ENCODE measurements at regions of chr12 and their contacts with region 1.

Region 1: GRCh38 chr12:113174461-113175384 is 10.6 kb downstream of the DDX54 start:
- DNase-seq: peak; percentile 86
- ATAC-seq: peak; percentile 88
- H3K4me3 Mint-ChIP-seq: no peak overlapping the region
- H3K27ac Mint-ChIP-seq: peak overlapping the region; percentile 90
- H3K4me1 Mint-ChIP-seq: no peaks in the 10 kb centered on the region
- H3K27me3 Mint-ChIP-seq: no peaks in the 10 kb centered on the region
- CTCF ChIP-seq: peak; percentile 99

Region 2: GRCh38 chr12:113065126-113066007 is 109.4 kb before region 1 on chr12:
- CTCF ChIA-PET with region 1: interaction called, 14 read pairs
- POLR2A ChIA-PET with region 1: no interaction called
- DNase-seq: peak; percentile 77
- ATAC-seq: peak; percentile 82
- H3K4me3 Mint-ChIP-seq: peak overlapping the region; percentile 47
- H3K27ac Mint-ChIP-seq: no peak overlapping the region
- H3K4me1 Mint-ChIP-seq: peaks cover 31% of the 10 kb centered on the region
- H3K27me3 Mint-ChIP-seq: peaks cover 3% of the 10 kb centered on the region; the same call in 1 of the 2 replicates
- CTCF ChIP-seq: no peak

Region 3: GRCh38 chr12:113092607-113093408 is 81.9 kb before region 1 on chr12:
- CTCF ChIA-PET with region 1: interaction called, 11 read pairs
- POLR2A ChIA-PET with region 1: no interaction called
- DNase-seq: peak; percentile 89
- ATAC-seq: peak; percentile 91
- H3K4me3 Mint-ChIP-seq: peak overlapping the region; percentile 80
- H3K27ac Mint-ChIP-seq: peak overlapping the region; percentile 70
- H3K4me1 Mint-ChIP-seq: peaks cover 11% of the 10 kb centered on the region
- H3K27me3 Mint-ChIP-seq: no peaks in the 10 kb centered on the region; the same call in none of the 2 replicates
- CTCF ChIP-seq: no peak

Region 4: GRCh38 chr12:113135178-113136127 is 39.3 kb before region 1 on chr12 and contains the start of gene RASAL1:
- CTCF ChIA-PET with region 1: interaction called, 20 read pairs
- POLR2A ChIA-PET with region 1: no interaction called
- DNase-seq: peak; percentile 94
- ATAC-seq: peak; percentile 89
- H3K4me3 Mint-ChIP-seq: peak within 1 kb of the TSS; percentile 74
- H3K27ac Mint-ChIP-seq: 0 out of 2 replicates have a peak within 1 kb of the TSS, but pooled peaks have one; percentile 20
- H3K4me1 Mint-ChIP-seq: peaks cover 18% of the 10 kb centered on the region
- H3K27me3 Mint-ChIP-seq: peaks cover 26% of the 10 kb centered on the region
- CTCF ChIP-seq: peak; percentile 81
- total RNA-seq, gene RASAL1: 6.9 to 8.1 TPM (median 8.0 TPM) in 3 replicates

Region 5: GRCh38 chr12:113152835-113153814 is 21.6 kb before region 1 on chr12:
- CTCF ChIA-PET with region 1: interaction called, 40 read pairs
- POLR2A ChIA-PET with region 1: no interaction called
- DNase-seq: peak; percentile 72
- ATAC-seq: peak; percentile 49
- H3K4me3 Mint-ChIP-seq: peak overlapping the region; percentile 67
- H3K27ac Mint-ChIP-seq: no peak overlapping the region
- H3K4me1 Mint-ChIP-seq: peaks cover 21% of the 10 kb centered on the region
- H3K27me3 Mint-ChIP-seq: peaks cover 58% of the 10 kb centered on the region
- CTCF ChIP-seq: no peak

Region 6: DNA sequence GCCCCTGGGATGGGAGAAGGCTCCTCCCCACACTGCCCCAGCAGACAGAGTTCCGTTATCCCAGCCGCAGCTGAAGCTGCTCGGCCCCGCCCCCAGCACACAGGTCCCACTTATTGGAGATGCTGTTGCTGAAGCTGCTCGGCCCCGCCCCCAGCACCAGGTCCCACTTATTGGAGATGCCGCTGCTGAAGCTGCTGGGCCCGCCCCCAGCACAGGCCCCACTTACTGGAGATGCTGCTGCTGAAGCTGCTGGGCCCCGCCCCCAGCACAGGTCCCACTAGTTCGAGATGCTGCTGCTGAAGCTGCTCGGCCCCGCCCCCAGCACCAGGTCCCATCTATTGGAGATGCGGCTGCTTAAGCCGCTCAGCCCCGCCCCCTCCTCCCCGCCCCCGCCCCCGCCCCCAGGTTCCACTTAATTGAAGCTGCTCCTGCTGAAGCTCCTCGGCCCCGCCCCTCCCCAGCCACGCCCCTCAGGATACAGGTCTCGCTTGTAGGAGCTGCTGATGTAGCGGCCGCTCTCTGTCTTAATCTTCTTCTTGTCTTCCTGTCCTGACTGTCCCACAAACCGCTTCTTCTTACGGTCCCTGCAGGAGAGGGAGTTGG is 13.2 kb before region 1 on chr12:
- CTCF ChIA-PET with region 1: interaction called, 38 read pairs
- POLR2A ChIA-PET with region 1: no interaction called
- DNase-seq: peak; percentile 97
- ATAC-seq: peak; percentile 95
- H3K4me3 Mint-ChIP-seq: peak overlapping the region; percentile 49
- H3K27ac Mint-ChIP-seq: peak overlapping the region; percentile 83
- H3K4me1 Mint-ChIP-seq: peaks cover 28% of the 10 kb centered on the region
- H3K27me3 Mint-ChIP-seq: no peaks in the 10 kb centered on the region
- CTCF ChIP-seq: no peak

Region 7: GRCh38 chr12:113184900-113185773 is 10.4 kb after region 1 on chr12 and contains the starts of genes DDX54 and RITA1:
- CTCF ChIA-PET with region 1: interaction called, 21 read pairs
- POLR2A ChIA-PET with region 1: no interaction called
- DNase-seq: peak; percentile 89
- ATAC-seq: peak; percentile 87
- H3K4me3 Mint-ChIP-seq: peak within 1 kb of the TSS; percentile 88
- H3K27ac Mint-ChIP-seq: peak within 1 kb of the TSS; percentile 76
- H3K4me1 Mint-ChIP-seq: peaks cover 14% of the 10 kb centered on the region
- H3K27me3 Mint-ChIP-seq: no peaks in the 10 kb centered on the region
- CTCF ChIP-seq: no peak
- total RNA-seq, gene DDX54: 120 to 151 TPM (median 123 TPM) in 3 replicates
- total RNA-seq, gene RITA1: 26.4 to 29.3 TPM (median 27.1 TPM) in 3 replicates

Region 8: GRCh38 chr12:113252456-113252855 is 77.7 kb after region 1 on chr12:
- CTCF ChIA-PET with region 1: no interaction called
- POLR2A ChIA-PET with region 1: no interaction called
- DNase-seq: no peak
- ATAC-seq: no peak
- H3K4me3 Mint-ChIP-seq: no peak overlapping the region
- H3K27ac Mint-ChIP-seq: peak overlapping the region; percentile 50; the same call in 1 of the 2 replicates
- H3K4me1 Mint-ChIP-seq: peaks cover 14% of the 10 kb centered on the region
- H3K27me3 Mint-ChIP-seq: no peaks in the 10 kb centered on the region
- CTCF ChIP-seq: no peak

Region 9: GRCh38 chr12:113325916-113326315 is 151.2 kb after region 1 on chr12:
- CTCF ChIA-PET with region 1: no interaction called
- POLR2A ChIA-PET with region 1: no interaction called
- DNase-seq: no peak
- ATAC-seq: no peak
- H3K4me3 Mint-ChIP-seq: no peak overlapping the region
- H3K27ac Mint-ChIP-seq: no peak overlapping the region
- H3K4me1 Mint-ChIP-seq: 0 out of 2 replicates have a peak, but pooled peaks cover 2% of the 10 kb centered on the region
- H3K27me3 Mint-ChIP-seq: no peaks in the 10 kb centered on the region
- CTCF ChIP-seq: no peak

Region 10: DNA sequence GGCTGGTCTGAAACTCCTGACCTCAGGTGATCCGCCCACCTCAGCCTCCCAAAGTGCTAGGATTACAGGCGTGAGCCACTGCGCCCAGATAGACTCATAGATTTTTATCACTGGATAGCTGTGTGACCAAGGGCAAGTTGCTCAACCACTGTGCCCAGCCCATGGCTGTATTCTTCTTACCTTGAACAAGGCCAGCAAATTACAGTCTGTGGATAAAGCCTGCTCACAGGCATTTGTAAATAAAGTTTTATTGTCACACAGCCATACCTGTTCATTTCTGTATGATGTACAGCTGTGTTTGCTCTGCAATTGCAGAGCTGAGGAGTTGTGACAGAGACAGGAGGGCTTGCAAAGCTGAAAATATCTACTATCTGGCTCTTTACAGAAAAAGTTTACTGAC is 332.1 kb after region 1 on chr12:
- CTCF ChIA-PET with region 1: no interaction called
- POLR2A ChIA-PET with region 1: no interaction called
- DNase-seq: no peak
- ATAC-seq: no peak
- H3K4me3 Mint-ChIP-seq: no peak overlapping the region
- H3K27ac Mint-ChIP-seq: no peak overlapping the region
- H3K4me1 Mint-ChIP-seq: peaks cover 21% of the 10 kb centered on the region
- H3K27me3 Mint-ChIP-seq: peaks cover 4% of the 10 kb centered on the region
- CTCF ChIP-seq: no peak

Region 11: DNA sequence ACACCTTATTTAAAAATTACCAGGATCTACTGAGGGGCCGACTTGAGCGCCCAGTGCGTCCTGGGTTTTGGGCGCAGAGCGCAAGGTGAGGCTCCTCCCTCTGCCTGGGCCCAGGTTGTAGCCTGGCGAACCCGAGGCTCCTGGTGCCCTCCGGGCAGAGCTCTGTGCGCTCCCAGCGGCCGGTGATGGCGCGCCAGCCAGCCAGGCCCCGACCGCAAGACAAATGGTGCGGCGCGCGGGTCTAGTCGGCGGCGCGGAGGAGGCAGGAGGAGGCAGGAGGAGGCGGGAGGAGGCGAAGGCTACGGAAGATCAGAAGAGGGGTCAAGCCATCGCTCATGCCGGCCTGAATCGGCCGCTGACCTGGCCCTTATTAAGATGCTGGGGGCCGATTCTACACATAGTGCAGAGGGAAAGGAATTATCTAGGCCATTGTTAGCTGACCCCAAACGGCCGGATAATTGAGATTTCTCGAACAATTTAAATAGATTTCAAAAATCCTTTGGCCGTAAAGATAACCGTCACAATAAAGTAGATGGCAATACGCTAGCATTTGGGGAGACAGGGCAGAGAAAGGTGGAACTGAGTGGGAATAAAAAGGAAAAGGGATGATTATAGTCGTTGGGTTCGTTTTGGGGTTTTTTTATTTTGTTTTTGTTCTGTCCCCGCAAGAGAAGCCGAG is 1228.4 kb after region 1 on chr12:
- CTCF ChIA-PET with region 1: no interaction called
- POLR2A ChIA-PET with region 1: no interaction called
- DNase-seq: peak; percentile 87
- ATAC-seq: peak; percentile 71
- H3K4me3 Mint-ChIP-seq: peak overlapping the region; percentile 56
- H3K27ac Mint-ChIP-seq: no peak overlapping the region
- H3K4me1 Mint-ChIP-seq: peaks cover 82% of the 10 kb centered on the region
- H3K27me3 Mint-ChIP-seq: peaks cover 100% of the 10 kb centered on the region
- CTCF ChIP-seq: no peak